Caco-2 (cell line): ENCODE measurements at regions of chr2 and their contacts with region 1.

Region 1: GRCh38 chr2:175309799-175310198 is 128.3 kb upstream of the ATP5MC3 start:
- DNase-seq: peak; percentile 45 to 58
- H3K4me3 ChIP-seq: no peak overlapping the region
- H3K4me3 Mint-ChIP-seq: no peak overlapping the region
- H3K27ac Mint-ChIP-seq: no peak overlapping the region
- H3K4me1 ChIP-seq: no peaks in the 10 kb centered on the region
- H3K4me1 Mint-ChIP-seq: no peaks in the 10 kb centered on the region
- H3K27me3 ChIP-seq: no peaks in the 10 kb centered on the region
- H3K27me3 Mint-ChIP-seq: peaks cover 17% of the 10 kb centered on the region
- CTCF ChIP-seq: peak; percentile 60 to 63

Region 2: GRCh38 chr2:175326801-175327200 is 17.0 kb after region 1 on chr2:
- CTCF ChIA-PET with region 1: no interaction called
- POLR2A ChIA-PET with region 1: no interaction called
- intact Hi-C with region 1: loop called (anchors 2 kb)
- DNase-seq: no peak
- H3K4me3 ChIP-seq: no peak overlapping the region
- H3K4me3 Mint-ChIP-seq: no peak overlapping the region
- H3K27ac Mint-ChIP-seq: no peak overlapping the region
- H3K4me1 ChIP-seq: no peaks in the 10 kb centered on the region
- H3K4me1 Mint-ChIP-seq: no peaks in the 10 kb centered on the region
- H3K27me3 ChIP-seq: no peaks in the 10 kb centered on the region
- H3K27me3 Mint-ChIP-seq: no peaks in the 10 kb centered on the region
- CTCF ChIP-seq: no peak